Activated naive CD4-positive, alpha-beta T cell treated with anti-CD3 and anti-CD28 coated beads for 36 hours (primary cell): ENCODE measurements at regions of chr21 and their contacts with region 1.

Region 1: GRCh38 chr21:37072988-37073416 is at the starts of genes PIGP and TTC3:
- DNase-seq: peak; percentile 94
- H3K4me3 Mint-ChIP-seq: peak within 1 kb of the TSS; percentile 88
- H3K27ac Mint-ChIP-seq: peak within 1 kb of the TSS; percentile 86
- H3K4me1 Mint-ChIP-seq: peaks cover 42% of the 10 kb centered on the region
- H3K27me3 Mint-ChIP-seq: no peaks in the 10 kb centered on the region
- total RNA-seq, gene PIGP: 12.0 to 16.9 TPM
- total RNA-seq, gene TTC3: 53.7 to 53.8 TPM

Region 2: DNA sequence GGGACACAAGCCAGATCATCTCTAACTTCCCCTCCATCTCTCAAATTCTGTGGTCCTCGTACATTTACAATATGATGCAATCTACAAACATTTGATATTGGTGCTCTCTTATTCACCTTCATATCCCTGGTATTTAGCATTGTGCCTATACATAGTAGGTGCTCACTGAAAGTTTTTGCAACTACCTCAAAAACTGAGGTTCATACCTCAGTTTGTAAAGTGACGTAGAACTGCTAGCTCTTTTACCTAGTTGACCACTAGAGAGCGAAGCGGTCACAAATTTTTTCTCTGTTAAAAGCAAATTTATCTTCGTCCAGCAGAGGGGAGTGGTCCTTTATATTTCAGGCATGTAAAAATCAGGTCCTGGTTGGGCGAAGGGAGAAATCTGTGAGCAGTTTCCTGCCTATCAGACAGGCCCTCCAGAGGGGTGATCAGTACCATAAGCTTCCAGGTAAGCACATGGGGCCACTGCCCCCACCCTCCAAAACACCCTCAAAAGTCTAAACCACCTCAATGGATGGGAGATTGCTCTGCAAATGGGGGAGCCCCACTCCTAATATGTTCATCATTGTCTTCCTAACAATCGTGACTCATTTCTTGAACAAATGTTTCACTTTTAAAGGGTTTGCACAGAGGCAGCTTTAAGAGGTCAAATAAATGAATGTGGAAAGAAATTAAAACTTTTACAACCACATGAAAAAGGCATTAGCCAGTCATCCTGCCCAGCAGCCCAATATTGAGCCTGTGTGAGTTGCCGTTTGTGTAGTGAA is 95.9 kb before region 1 on chr21:
- CTCF ChIA-PET with region 1: no interaction called
- intact Hi-C with region 1: loop called (anchors 1 kb)
- DNase-seq: peak; percentile 75
- H3K4me3 Mint-ChIP-seq: no peak overlapping the region
- H3K27ac Mint-ChIP-seq: no peak overlapping the region
- H3K4me1 Mint-ChIP-seq: peaks cover 23% of the 10 kb centered on the region
- H3K27me3 Mint-ChIP-seq: peaks cover 9% of the 10 kb centered on the region

Region 3: DNA sequence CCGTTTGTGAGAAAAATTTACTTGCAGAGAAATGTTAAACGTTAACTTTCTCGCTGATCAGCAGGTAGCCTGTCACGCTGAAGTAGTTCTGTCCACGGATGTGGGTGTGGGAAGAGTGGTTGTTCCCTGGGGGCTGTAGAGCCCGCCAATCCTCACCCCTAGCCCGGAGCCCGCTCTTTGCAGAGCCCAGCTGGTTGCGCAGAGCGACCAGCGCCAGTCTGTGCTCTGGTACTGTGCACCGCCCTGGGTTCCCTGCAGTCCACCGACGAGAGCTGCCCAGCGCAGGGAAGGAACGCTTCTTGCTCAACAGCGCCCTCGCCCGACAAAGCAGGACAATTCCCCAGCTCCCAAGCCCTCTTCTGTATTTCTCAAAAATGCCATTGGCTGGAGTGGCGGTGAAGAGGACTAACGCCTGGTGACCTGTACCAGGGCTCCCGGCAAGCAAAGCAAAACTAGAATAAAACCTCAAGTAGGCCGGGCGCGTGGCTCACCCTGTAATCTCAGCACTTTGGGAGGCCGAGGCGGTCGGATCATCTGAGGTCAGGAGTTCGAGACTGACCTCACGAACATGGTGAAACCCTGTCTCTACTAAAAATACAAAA is 63.2 kb before region 1 on chr21:
- CTCF ChIA-PET with region 1: no interaction called
- intact Hi-C with region 1: loop called (anchors 2 kb)
- DNase-seq: peak; percentile 87
- H3K4me3 Mint-ChIP-seq: no peak overlapping the region
- H3K27ac Mint-ChIP-seq: no peak overlapping the region
- H3K4me1 Mint-ChIP-seq: peaks cover 14% of the 10 kb centered on the region
- H3K27me3 Mint-ChIP-seq: peaks cover 41% of the 10 kb centered on the region

Region 4: DNA sequence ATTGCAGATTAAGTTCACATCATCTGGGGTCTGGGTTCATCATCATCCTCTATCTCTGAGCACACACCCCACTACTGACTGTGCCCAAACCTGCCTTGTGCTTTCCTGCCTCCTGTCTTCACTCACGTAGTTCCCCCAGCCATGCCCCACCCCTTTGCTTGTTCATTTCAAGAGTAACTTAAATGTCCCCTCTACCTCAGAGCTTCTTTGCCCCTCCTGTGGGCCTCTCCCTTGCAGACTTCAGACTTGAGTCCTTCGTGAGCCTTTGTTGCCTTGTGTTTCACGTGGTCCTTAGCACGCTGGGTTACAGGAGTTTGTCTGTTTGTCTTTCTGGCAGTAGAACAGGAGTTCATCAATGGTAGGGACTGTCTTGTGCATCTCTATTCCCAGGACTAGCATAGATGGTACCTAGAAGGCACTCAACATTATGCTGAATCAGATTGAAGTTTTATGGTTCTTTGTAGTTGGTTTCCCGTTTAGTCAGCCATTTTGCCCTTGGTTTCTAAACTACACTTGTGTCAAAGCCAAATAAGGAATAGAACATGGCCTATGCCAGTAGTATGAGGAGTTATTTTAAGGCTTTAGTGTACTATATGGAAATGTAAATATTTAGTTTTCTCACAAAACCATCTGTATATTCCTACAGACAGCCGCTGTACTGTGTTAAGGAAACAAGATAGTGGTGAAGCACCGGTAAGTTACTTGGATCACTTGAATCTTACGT is 86.2 kb after region 1 on chr21:
- CTCF ChIA-PET with region 1: no interaction called
- intact Hi-C with region 1: loop called (anchors 2 kb)
- DNase-seq: peak; percentile 72
- H3K4me3 Mint-ChIP-seq: no peak overlapping the region
- H3K27ac Mint-ChIP-seq: peak overlapping the region; percentile 65
- H3K4me1 Mint-ChIP-seq: peaks cover 10% of the 10 kb centered on the region
- H3K27me3 Mint-ChIP-seq: no peaks in the 10 kb centered on the region

Region 5: GRCh38 chr21:37267269-37268184 is 194.5 kb after region 1 on chr21 and contains the start of gene VPS26C:
- CTCF ChIA-PET with region 1: no interaction called
- intact Hi-C with region 1: loop called (anchors 2 kb)
- DNase-seq: peak; percentile 99
- H3K4me3 Mint-ChIP-seq: peak within 1 kb of the TSS; percentile 94
- H3K27ac Mint-ChIP-seq: peak within 1 kb of the TSS; percentile 96
- H3K4me1 Mint-ChIP-seq: peaks cover 38% of the 10 kb centered on the region
- H3K27me3 Mint-ChIP-seq: no peaks in the 10 kb centered on the region
- total RNA-seq, gene VPS26C: 50.1 to 51.0 TPM

Region 6: DNA sequence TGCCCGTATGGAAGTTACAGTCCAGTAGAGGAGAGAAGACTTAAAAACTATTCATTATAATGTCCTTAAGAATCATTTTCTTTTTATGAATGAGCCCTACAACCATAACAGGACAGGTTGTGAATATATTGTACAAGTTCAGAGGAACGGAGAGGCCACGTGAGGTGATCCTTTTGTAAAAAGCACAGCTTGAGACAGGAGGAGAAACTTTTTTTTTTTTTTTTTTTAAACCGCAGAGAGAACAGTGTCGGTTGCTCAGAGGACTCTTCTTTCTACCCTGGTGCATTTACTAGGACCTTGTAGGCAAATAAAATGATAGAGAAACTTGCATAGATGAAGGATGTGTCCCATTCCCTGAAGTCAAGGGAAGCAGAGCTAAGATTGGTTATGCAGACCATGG is 325.7 kb after region 1 on chr21:
- CTCF ChIA-PET with region 1: no interaction called
- intact Hi-C with region 1: no loop called
- DNase-seq: peak; percentile 44
- H3K4me3 Mint-ChIP-seq: peak overlapping the region; percentile 7
- H3K27ac Mint-ChIP-seq: peak overlapping the region; percentile 1
- H3K4me1 Mint-ChIP-seq: peaks cover 80% of the 10 kb centered on the region
- H3K27me3 Mint-ChIP-seq: no peaks in the 10 kb centered on the region

Region 7: DNA sequence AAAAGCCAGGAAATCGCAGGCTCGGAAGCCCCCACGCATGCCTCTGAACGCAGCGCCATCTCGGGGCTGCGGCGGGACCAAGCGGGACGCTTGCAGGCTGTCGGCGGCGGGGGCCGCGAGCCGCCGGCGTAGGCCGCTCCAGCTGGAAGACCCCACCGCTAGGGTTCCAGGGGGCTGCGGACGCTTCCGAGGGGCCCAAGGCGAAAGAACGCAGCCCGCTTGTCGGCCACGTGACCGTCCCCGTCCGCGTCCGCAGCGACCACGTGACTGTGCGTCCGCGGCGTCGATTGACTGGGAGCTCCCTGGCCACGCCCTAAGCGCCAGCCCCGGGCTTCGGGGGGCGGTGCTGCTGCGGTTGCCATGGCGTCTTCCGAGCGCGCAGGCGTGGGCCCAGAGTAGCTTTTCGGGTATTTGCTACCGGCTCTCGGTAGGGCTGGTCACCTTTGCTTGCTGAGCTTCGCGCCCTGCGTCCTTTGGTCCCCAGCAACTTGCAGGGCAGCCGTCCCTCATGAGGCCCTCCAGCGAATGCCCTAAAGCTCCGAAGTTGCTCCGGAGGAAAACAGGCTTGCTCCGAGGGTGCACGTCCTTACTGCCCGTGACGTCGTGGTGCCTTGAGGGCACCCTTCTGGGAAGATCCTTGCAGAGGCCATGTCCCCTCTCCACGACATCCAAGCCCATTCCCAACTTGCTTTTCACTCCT is 490.8 kb after region 1 on chr21:
- CTCF ChIA-PET with region 1: no interaction called
- intact Hi-C with region 1: loop called (anchors 1 kb)
- DNase-seq: peak; percentile 92
- H3K4me3 Mint-ChIP-seq: peak overlapping the region; percentile 88
- H3K27ac Mint-ChIP-seq: peak overlapping the region; percentile 99
- H3K4me1 Mint-ChIP-seq: peaks cover 20% of the 10 kb centered on the region
- H3K27me3 Mint-ChIP-seq: no peaks in the 10 kb centered on the region